H1 (cell line): ENCODE measurements at regions of chr5 and their contacts with region 1.

Region 1: GRCh38 chr5:141701360-141702119 is 19.5 kb upstream of the ARAP3 start:
- DNase-seq: no peak
- H3K4me3 ChIP-seq: peak overlapping the region in 1 of 4 experiments; percentile 73; a peak in 1 of 8 replicates
- H3K27ac ChIP-seq: no peak overlapping the region
- H3K4me1 ChIP-seq: peaks cover 5 to 9% (median 5%) of the 10 kb centered on the region in 4 experiments
- H3K27me3 ChIP-seq: peaks cover 0 to 36% (median 30%) of the 10 kb centered on the region in 4 experiments; a peak in 6 of 7 replicates
- CTCF ChIP-seq: no peak
- EP300 ChIP-seq: no peak
- POLR2A ChIP-seq: no peak
- RAD21 ChIP-seq: no peak

Region 2: DNA sequence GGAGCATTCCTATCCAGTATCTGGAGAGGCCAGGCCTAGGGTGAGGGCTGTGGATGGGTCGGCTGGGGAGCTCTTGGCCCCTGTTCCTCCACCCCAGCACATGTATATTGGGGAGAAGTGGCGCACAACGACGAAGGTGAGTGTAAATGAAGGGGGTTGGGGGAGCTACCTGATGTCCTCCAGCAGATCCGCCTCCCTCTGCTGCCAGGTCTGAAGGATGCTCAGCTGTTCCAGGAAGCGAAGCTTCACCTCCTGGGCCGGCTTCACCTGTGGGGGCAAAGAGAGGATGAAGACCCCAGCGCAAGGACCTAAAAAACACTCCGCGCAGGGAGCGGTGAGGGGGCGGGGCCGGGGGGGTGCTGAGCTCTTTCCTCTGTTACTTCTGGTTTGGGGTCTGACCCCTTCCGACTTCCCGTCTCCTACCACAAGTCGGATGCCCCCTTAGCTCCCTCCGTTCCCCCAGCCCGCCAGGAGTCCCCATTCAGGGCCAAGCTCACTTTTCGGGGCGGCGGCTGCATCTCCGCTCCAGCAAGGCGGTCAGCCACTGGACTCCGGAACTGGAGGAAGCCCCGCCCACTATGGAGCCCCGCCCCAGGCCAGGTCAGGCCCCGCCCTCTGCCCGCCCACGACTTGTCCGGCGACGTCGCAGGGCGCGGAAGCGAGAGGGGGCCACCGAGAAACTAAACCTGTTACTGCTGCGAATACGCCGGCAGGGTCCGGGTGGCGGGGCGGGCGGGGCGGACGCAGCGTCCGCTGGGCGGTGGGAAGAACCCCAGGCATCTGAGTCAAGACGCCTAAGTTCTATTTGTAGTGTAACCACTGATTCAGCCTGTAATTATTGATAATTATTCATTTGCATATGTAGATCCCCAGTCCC is 50.5 kb before region 1 on chr5 and contains the start of gene FCHSD1:
- CTCF ChIA-PET with region 1: no interaction called
- POLR2A ChIA-PET with region 1: no interaction called
- DNase-seq: peak; percentile 66 to 95
- H3K4me3 ChIP-seq: peak within 1 kb of the TSS; percentile 43 to 83 (median 67)
- H3K27ac ChIP-seq: no peak within 1 kb of the TSS
- H3K4me1 ChIP-seq: peaks cover 2 to 8% (median 6%) of the 10 kb centered on the region in 4 experiments; a peak in 6 of 7 replicates
- H3K27me3 ChIP-seq: no peaks in the 10 kb centered on the region; a peak in 1 of 7 replicates
- CTCF ChIP-seq: no peak
- EP300 ChIP-seq: no peak
- POLR2A ChIP-seq: peak in 1 of 2 experiments; percentile 27; a peak in 1 of 3 replicates
- RAD21 ChIP-seq: no peak; a peak in 1 of 4 replicates
- total RNA-seq, gene FCHSD1: 30.1 and 32.2 TPM in 2 replicates

Region 3: GRCh38 chr5:141672848-141673813 is 28.4 kb before region 1 on chr5:
- CTCF ChIA-PET with region 1: interaction called, 137 read pairs
- POLR2A ChIA-PET with region 1: no interaction called
- DNase-seq: no peak
- H3K4me3 ChIP-seq: no peak overlapping the region
- H3K27ac ChIP-seq: no peak overlapping the region; the same call in 1 of the 2 replicates
- H3K4me1 ChIP-seq: peaks cover 2 to 13% (median 8%) of the 10 kb centered on the region in 4 experiments; a peak in 5 of 7 replicates
- H3K27me3 ChIP-seq: no peaks in the 10 kb centered on the region
- CTCF ChIP-seq: no peak
- EP300 ChIP-seq: no peak
- POLR2A ChIP-seq: no peak
- RAD21 ChIP-seq: no peak

Region 4: DNA sequence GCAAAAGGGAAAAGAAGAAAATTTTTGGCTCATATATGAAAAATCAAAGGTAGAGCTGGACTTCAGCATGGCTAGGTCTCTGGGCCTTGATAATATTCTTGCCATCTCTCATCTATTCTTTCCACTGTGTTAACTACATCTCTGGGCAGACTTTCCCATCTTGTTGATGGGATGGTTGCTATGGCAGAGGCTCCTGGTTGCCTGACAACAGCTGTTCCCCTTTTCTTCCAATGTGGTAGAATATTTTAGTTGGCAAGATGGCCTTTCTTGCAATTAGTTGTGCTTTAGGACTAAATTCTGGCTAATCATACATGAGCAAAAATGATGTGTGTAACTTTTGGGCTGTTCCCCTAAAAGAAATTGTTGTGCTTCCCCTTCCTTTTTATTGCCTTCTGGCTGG is 20.7 kb after region 1 on chr5:
- CTCF ChIA-PET with region 1: interaction called, 95 read pairs
- POLR2A ChIA-PET with region 1: interaction called, 5 read pairs
- DNase-seq: no peak
- H3K4me3 ChIP-seq: no peak overlapping the region
- H3K27ac ChIP-seq: no peak overlapping the region
- H3K4me1 ChIP-seq: peaks cover 2 to 10% (median 5%) of the 10 kb centered on the region in 4 experiments; a peak in 6 of 7 replicates
- H3K27me3 ChIP-seq: no peaks in the 10 kb centered on the region
- CTCF ChIP-seq: no peak
- EP300 ChIP-seq: no peak
- POLR2A ChIP-seq: no peak
- RAD21 ChIP-seq: no peak

Region 5: DNA sequence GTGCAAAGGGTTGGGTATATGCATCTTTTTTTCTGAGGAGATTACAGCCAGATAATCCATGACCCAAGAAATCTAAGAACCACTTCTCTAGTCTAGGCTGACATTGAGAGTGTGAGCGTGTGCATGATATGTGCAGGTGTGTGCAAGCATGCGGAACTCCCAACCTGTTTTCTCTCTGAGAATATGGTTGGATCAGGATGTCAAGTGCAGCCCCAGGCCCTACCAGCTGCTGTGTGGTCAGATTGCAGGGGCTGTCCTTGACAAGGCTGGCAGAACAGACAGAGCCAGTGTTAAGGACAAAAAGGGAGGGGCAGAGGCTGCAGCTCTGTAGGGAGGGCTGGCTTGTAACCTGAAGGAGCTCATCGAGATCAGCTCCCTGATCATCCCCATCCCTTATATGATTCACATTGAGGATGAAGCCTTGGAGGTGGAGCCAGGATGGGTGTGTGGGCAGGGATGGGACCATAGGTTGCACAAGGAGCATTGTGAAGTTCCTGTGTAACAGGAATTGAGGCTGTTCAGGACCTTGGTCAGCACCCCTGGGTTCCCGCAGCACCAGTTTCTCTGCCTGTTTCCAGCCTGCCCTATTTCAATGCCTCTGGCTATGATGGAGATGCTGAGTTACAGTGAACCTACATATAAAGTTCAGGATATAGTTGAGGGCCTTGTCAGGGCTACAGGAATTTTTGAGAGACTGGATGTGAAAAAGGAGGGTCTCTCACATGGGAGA is 33.1 kb after region 1 on chr5:
- CTCF ChIA-PET with region 1: interaction called, 38 read pairs
- POLR2A ChIA-PET with region 1: interaction called, 4 read pairs
- DNase-seq: peak in 1 of 2 experiments; percentile 87
- H3K4me3 ChIP-seq: no peak overlapping the region
- H3K27ac ChIP-seq: no peak overlapping the region
- H3K4me1 ChIP-seq: peaks cover 1 to 15% (median 7%) of the 10 kb centered on the region in 4 experiments; a peak in 5 of 7 replicates
- H3K27me3 ChIP-seq: no peaks in the 10 kb centered on the region
- CTCF ChIP-seq: no peak
- EP300 ChIP-seq: no peak
- POLR2A ChIP-seq: no peak
- RAD21 ChIP-seq: 0 out of 4 replicates have a peak, but pooled peaks have one; percentile 4 to 17

Region 6: GRCh38 chr5:141757402-141757801 is 55.9 kb after region 1 on chr5:
- CTCF ChIA-PET with region 1: interaction called, 98 read pairs
- POLR2A ChIA-PET with region 1: interaction called, 7 read pairs
- DNase-seq: peak in 1 of 2 experiments; percentile 29
- H3K4me3 ChIP-seq: no peak overlapping the region
- H3K27ac ChIP-seq: no peak overlapping the region
- H3K4me1 ChIP-seq: peaks cover 17 to 30% (median 26%) of the 10 kb centered on the region in 4 experiments
- H3K27me3 ChIP-seq: peaks cover 9 to 22% (median 18%) of the 10 kb centered on the region in 4 experiments
- CTCF ChIP-seq: peak in 2 of 3 experiments; percentile 78 to 79; a peak in 3 of 4 replicates
- EP300 ChIP-seq: no peak
- POLR2A ChIP-seq: no peak
- RAD21 ChIP-seq: peak; percentile 76 to 86